ENCODE measurements at regions of chr19 and their contacts with region 1.

Region 1: GRCh38 chr19:48618916-48619691 is at the starts of genes RPL18 and SPHK2:
- DNase-seq: peak; percentile 100
- ATAC-seq: peak; percentile 83
- H3K4me3 ChIP-seq: peak within 1 kb of the TSS; percentile 82
- H3K27ac ChIP-seq: peak within 1 kb of the TSS; percentile 77
- H3K4me1 ChIP-seq: peaks cover 12% of the 10 kb centered on the region
- H3K27me3 ChIP-seq: no peaks in the 10 kb centered on the region
- CTCF ChIP-seq: 0 out of 2 replicates have a peak, but pooled peaks have one; percentile 0
- POLR2A ChIP-seq: peak; percentile 99
- RAD21 ChIP-seq: no peak
- total RNA-seq, gene RPL18: 1,909 and 2,552 TPM in 2 replicates
- total RNA-seq, gene SPHK2: 1.6 and 1.7 TPM in 2 replicates

Region 2: DNA sequence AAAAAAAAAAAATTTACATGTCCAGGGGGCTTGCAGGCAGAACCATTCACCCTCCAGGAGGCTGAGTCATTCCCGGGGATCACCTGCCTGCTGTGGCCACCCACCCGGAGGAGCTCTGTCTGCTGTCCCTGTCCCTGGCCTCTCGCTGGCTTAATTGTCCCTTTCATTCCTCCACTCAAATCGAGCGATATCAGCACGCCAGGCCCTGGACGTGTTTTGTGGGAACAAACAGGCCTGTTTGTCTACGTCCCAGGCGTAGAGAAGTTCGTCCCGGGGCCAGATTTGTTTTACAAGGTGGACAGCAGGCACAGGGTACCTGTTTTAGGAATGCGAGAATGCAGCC is 46.0 kb before region 1 on chr19:
- CTCF ChIA-PET with region 1: no interaction called
- POLR2A ChIA-PET with region 1: interaction called, 10 read pairs
- dilution Hi-C with region 1: no loop called
- in situ Hi-C with region 1: no loop called
- intact Hi-C with region 1: no loop called
- DNase-seq: no peak
- ATAC-seq: no peak
- H3K4me3 ChIP-seq: no peak overlapping the region
- H3K27ac ChIP-seq: no peak overlapping the region
- H3K4me1 ChIP-seq: peaks cover 3% of the 10 kb centered on the region; the same call in 1 of the 2 replicates
- H3K27me3 ChIP-seq: no peaks in the 10 kb centered on the region
- CTCF ChIP-seq: no peak
- POLR2A ChIP-seq: no peak
- RAD21 ChIP-seq: no peak